ENCODE measurements at regions of chr3 and their contacts with region 1.

Region 1: DNA sequence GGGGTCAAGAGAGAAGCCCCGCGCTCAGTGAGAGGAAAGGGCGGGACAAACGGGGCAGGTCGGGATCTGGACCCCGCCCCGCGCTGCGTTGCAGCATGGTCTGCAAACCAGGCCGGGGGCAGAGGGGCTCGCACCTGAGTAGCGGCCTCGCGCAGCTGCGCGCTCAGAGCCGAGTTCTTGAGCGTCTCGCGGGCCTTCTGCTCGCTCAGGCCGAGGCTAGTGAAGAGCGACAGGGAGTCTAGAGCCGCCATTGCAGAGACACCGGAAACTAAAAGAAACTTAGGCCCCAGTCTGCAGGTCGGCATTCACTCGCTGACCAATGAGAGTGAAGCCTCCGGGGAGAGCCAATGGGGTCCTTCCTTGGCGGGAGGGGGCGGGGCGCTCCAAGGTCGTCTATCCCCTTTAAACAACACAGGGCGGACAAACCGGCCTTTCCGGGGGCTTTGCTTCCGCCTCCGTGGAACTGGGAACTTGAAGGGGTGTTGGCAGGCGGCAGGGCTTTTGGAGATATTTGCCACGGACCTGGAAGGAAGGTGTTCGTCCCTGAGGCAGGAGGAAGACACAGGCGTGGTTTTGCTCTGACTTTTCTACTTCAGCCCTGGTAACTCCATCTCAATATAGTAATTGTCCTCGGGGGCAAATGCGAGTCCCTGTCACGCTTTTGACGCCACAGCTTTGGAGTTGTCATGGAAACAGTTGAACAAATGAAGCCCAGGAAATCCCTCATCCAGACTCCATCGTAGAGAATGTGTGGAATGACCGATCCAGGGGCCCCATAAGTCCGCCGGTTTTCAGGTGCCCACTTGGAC is at the start of gene QARS1:
- DNase-seq: peak; percentile 77 to 90 (median 87)
- ATAC-seq: peak; percentile 100
- H3K4me3 ChIP-seq: peak within 1 kb of the TSS; percentile 99
- H3K4me3 Mint-ChIP-seq: peak within 1 kb of the TSS; percentile 89 to 98 (median 96)
- H3K27ac ChIP-seq: peak within 1 kb of the TSS; percentile 94
- H3K27ac Mint-ChIP-seq: peak within 1 kb of the TSS; percentile 91 to 100 (median 98)
- H3K4me1 ChIP-seq: peaks cover 14 to 18% of the 10 kb centered on the region in 2 donors
- H3K4me1 Mint-ChIP-seq: peaks cover 16 to 41% (median 26%) of the 10 kb centered on the region in 7 donors
- H3K27me3 ChIP-seq: no peaks in the 10 kb centered on the region
- H3K27me3 Mint-ChIP-seq: no peaks in the 10 kb centered on the region
- total RNA-seq, gene QARS1: 212 to 258 (median 233) TPM

Region 2: DNA sequence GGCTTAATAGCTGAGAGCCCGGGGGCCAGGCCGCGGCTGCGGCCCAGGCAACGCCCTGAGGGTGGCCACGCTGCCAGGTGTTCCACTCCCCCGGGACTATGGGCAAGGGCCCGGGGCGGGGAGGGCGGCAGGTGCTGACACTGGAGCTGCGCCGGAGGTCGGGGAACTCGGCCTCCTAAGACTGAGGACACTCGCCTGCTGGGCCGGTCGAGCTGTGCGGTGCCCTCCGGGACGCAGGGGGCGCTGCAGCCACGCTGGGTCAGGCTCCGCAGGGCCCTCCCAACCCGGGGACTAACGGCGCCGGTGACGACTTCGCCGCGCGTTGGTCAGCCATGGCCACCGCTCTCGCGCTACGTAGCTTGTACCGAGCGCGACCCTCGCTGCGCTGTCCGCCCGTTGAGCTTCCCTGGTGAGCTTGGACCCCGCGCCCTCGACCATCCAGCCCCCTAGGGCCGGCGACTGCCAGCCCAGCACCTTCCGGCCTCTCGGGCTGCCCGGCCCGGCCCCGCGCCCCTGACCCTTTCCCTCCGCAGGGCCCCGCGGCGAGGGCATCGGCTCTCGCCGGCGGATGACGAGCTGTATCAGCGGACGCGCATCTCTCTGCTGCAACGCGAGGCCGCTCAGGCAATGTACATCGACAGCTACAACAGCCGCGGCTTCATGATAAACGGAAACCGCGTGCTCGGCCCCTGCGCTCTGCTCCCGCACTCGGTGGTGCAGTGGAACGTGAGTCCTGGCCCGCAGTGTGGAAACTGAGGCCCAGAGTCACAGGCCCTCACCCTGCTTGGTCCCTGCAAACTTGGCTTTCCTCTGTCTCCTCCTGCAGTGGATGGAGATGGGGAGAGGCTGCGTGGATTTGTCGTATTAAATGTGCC is 82.6 kb before region 1 on chr3 and contains the start of gene NDUFAF3:
- CTCF ChIA-PET with region 1: no interaction called
- POLR2A ChIA-PET with region 1: interaction called, 16 read pairs
- intact Hi-C with region 1: no loop called
- DNase-seq: peak; percentile 84 to 96 (median 89)
- ATAC-seq: peak; percentile 89
- H3K4me3 ChIP-seq: peak within 1 kb of the TSS; percentile 99
- H3K4me3 Mint-ChIP-seq: peak within 1 kb of the TSS; percentile 92 to 99 (median 97)
- H3K27ac ChIP-seq: peak within 1 kb of the TSS; percentile 98
- H3K27ac Mint-ChIP-seq: peak within 1 kb of the TSS; percentile 95 to 99 (median 98)
- H3K4me1 ChIP-seq: peaks cover 24 to 25% of the 10 kb centered on the region in 2 donors
- H3K4me1 Mint-ChIP-seq: peaks cover 21 to 61% (median 47%) of the 10 kb centered on the region in 7 donors
- H3K27me3 ChIP-seq: no peaks in the 10 kb centered on the region
- H3K27me3 Mint-ChIP-seq: peaks cover 0 to 2% (median 0%) of the 10 kb centered on the region in 5 donors
- total RNA-seq, gene NDUFAF3: 63.8 to 110 (median 89.3) TPM

Region 3: DNA sequence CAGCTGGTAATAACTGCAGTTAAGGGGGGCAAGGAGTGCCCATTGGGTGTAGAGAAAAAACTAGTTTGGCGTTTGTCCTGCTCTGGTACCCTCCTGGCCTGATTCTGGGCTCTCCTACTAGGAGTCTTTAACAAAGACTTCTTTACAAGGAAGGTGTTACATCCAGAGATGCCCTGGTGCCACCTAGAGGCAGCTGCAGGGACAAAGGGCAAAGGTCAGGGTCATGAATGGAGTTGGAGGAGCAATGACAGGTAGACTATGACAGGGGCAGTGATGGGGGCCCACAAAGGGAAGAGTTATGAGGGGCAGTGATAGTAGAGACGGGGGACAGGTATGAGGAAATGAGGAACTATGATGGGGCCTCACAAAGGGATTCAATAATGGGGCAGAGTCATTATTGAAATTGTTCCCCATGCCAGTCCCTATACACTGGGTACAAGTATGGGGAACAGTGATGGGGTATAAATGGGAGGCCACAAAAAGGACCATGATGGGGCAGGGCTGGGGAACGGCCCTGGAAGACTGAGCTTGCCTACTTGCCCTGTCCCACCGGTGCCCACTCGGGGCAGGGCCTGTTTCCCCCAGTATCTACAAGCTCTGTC is 53.5 kb after region 1 on chr3:
- CTCF ChIA-PET with region 1: no interaction called
- POLR2A ChIA-PET with region 1: no interaction called
- intact Hi-C with region 1: loop called in 1 of 2 experiments (anchors 2 kb)
- DNase-seq: peak in 8 of 9 donors; percentile 40 to 68 (median 59)
- ATAC-seq: peak; percentile 89
- H3K4me3 ChIP-seq: no peak overlapping the region
- H3K4me3 Mint-ChIP-seq: no peak overlapping the region
- H3K27ac ChIP-seq: peak overlapping the region; percentile 20
- H3K27ac Mint-ChIP-seq: peak overlapping the region in 6 of 9 donors; percentile 3 to 82 (median 18)
- H3K4me1 ChIP-seq: no peaks in the 10 kb centered on the region
- H3K4me1 Mint-ChIP-seq: peaks cover 0 to 10% (median 5%) of the 10 kb centered on the region in 7 donors
- H3K27me3 ChIP-seq: no peaks in the 10 kb centered on the region
- H3K27me3 Mint-ChIP-seq: no peaks in the 10 kb centered on the region

Region 4: GRCh38 chr3:49165771-49166751 is 61.4 kb after region 1 on chr3 and contains the start of gene CCDC71:
- CTCF ChIA-PET with region 1: no interaction called
- POLR2A ChIA-PET with region 1: no interaction called
- intact Hi-C with region 1: loop called in 1 of 2 experiments (anchors 1 kb)
- DNase-seq: peak; percentile 63 to 82 (median 72)
- ATAC-seq: peak; percentile 85
- H3K4me3 ChIP-seq: peak within 1 kb of the TSS; percentile 58
- H3K4me3 Mint-ChIP-seq: peak within 1 kb of the TSS; percentile 89 to 96 (median 92)
- H3K27ac ChIP-seq: peak within 1 kb of the TSS; percentile 79
- H3K27ac Mint-ChIP-seq: peak within 1 kb of the TSS; percentile 87 to 96 (median 93)
- H3K4me1 ChIP-seq: peaks cover 16 to 29% of the 10 kb centered on the region in 2 donors
- H3K4me1 Mint-ChIP-seq: peaks cover 16 to 51% (median 42%) of the 10 kb centered on the region in 7 donors
- H3K27me3 ChIP-seq: no peaks in the 10 kb centered on the region
- H3K27me3 Mint-ChIP-seq: no peaks in the 10 kb centered on the region
- total RNA-seq, gene CCDC71: 16.5 to 39.5 (median 26.3) TPM